Heart right ventricle (tissue), 16 donors: ENCODE measurements at regions of chr12 and their contacts with region 1.

Region 1: DNA sequence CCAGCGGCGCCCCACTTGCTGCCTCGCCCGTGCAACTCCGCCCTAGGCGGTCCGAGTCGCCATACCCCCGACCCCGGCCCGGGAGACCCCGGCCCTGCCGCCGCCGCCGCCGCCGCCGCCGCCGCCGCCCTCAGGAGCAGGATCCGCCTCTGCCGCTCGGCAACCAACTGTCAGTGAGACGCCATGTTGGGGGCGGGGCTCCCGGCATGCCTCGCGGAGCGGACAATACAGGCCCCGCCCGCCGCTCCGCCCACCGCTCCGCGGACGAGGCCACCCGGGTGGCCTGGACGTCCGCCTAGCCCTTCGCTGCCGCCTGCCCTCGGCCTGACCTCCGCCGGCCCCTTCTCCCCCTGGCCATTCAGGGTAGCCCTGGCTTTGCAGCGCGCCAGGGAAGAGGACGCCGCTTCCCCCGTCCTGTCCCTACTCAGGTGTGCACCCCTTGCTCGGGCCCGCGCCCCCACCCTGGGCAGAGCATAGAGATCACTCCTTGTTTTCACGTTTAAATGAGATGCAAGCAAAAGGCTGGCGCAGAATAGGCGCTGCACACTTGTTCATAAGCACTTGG is at the start of gene HECTD4:
- DNase-seq: peak; percentile 95 to 97
- ATAC-seq: peak; percentile 99 to 100 (median 99)
- H3K4me3 ChIP-seq: peak within 1 kb of the TSS; percentile 63 to 99 (median 92)
- H3K27ac ChIP-seq: peak within 1 kb of the TSS; percentile 76 to 93 (median 88)
- H3K4me1 ChIP-seq: peaks cover 0 to 29% (median 23%) of the 10 kb centered on the region in 9 donors
- H3K27me3 ChIP-seq: no peaks in the 10 kb centered on the region
- CTCF ChIP-seq: no peak
- total RNA-seq, gene HECTD4: 20.1 to 28.7 (median 23.9) TPM

Region 2: GRCh38 chr12:112198120-112198733 is 184.1 kb before region 1 on chr12:
- intact Hi-C with region 1: loop called in 9 of 10 experiments (anchors 1 to 10 kb)
- DNase-seq: peak; percentile 26 to 35
- ATAC-seq: peak; percentile 48 to 79 (median 74)
- H3K4me3 ChIP-seq: no peak overlapping the region
- H3K27ac ChIP-seq: no peak overlapping the region
- H3K4me1 ChIP-seq: peaks cover 0 to 3% (median 0%) of the 10 kb centered on the region in 9 donors
- H3K27me3 ChIP-seq: no peaks in the 10 kb centered on the region
- CTCF ChIP-seq: peak; percentile 27 to 63 (median 57)

Region 3: DNA sequence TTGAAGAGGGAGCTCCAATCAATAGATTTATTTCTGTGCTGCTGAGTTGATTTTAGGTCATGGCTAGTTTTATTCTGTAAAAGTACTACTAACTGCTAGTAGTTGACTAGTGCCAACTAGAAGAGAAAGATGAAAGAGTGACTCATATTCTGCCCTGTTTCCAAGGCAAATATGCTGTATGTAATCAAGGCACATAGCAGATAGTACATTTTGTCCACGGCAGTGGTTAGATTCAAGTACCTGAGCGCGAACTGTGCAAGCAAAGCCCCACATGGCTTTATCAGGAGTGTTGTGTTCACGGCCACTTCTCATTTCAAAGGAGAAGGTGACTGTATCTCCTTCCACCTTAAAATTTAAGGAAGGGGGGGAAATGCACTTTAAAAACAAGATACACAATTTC is 130.1 kb before region 1 on chr12:
- intact Hi-C with region 1: loop called in 3 of 10 experiments (anchors 10 kb)
- DNase-seq: no peak
- ATAC-seq: no peak
- H3K4me3 ChIP-seq: no peak overlapping the region
- H3K27ac ChIP-seq: no peak overlapping the region
- H3K4me1 ChIP-seq: no peaks in the 10 kb centered on the region
- H3K27me3 ChIP-seq: no peaks in the 10 kb centered on the region
- CTCF ChIP-seq: no peak

Region 4: GRCh38 chr12:112270673-112271072 is 111.6 kb before region 1 on chr12:
- intact Hi-C with region 1: loop called in 1 of 10 experiments (anchors 10 kb)
- DNase-seq: no peak
- ATAC-seq: no peak
- H3K4me3 ChIP-seq: no peak overlapping the region
- H3K27ac ChIP-seq: no peak overlapping the region
- H3K4me1 ChIP-seq: no peaks in the 10 kb centered on the region
- H3K27me3 ChIP-seq: no peaks in the 10 kb centered on the region
- CTCF ChIP-seq: no peak

Region 5: DNA sequence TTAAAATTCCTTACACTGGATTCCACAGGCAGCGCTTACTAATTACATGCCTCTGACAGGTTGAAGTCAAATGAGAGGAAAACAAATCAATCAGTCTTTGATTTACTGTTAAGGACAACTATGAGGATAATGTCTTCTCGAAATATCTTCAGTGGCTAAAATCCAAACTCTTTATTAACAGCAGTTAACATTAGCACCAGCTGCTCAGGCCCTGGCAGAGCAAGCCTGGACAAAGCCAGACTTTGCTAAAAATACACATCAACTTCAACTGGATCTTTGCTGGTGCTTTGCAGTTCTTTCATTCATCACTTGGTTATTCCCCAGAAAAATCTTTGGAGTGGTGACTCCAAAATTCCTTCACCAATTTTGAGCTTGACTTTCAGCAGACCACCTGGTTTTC is 98.8 kb before region 1 on chr12:
- intact Hi-C with region 1: loop called in 6 of 10 experiments (anchors 5 to 10 kb)
- DNase-seq: peak in 1 of 2 donors; percentile 9
- ATAC-seq: peak in 6 of 8 donors; percentile 50 to 83 (median 58)
- H3K4me3 ChIP-seq: no peak overlapping the region
- H3K27ac ChIP-seq: peak overlapping the region in 5 of 10 donors; percentile 16 to 54 (median 31)
- H3K4me1 ChIP-seq: peaks cover 0 to 39% (median 10%) of the 10 kb centered on the region in 9 donors
- H3K27me3 ChIP-seq: no peaks in the 10 kb centered on the region
- CTCF ChIP-seq: no peak

Region 6: DNA sequence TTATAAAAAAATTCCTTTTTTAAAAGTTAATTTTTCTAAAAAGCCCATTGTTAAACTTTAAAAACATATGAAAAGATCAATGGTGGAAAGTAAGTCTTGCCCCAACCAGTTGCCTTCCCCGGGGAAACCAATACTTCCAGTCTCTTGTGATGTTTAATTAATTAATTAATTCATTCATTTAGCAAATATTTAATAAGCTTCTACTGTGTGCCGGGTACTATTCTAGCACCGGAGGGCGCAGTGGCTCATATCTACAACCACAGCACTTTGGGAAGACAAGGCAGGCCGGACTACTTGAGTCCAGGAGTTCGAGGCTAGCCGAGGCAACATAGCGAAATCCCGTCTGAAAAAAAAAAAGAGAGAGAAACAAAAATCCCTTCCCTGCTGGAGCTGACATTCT is 87.5 kb before region 1 on chr12:
- intact Hi-C with region 1: loop called in 3 of 10 experiments (anchors 10 kb)
- DNase-seq: no peak
- ATAC-seq: no peak
- H3K4me3 ChIP-seq: no peak overlapping the region
- H3K27ac ChIP-seq: no peak overlapping the region
- H3K4me1 ChIP-seq: peaks cover 0 to 3% (median 0%) of the 10 kb centered on the region in 9 donors
- H3K27me3 ChIP-seq: no peaks in the 10 kb centered on the region
- CTCF ChIP-seq: peak in 1 of 9 donors; percentile 9

Region 7: GRCh38 chr12:112303004-112303403 is 79.3 kb before region 1 on chr12:
- intact Hi-C with region 1: loop called in 2 of 10 experiments (anchors 10 kb)
- DNase-seq: no peak
- ATAC-seq: no peak
- H3K4me3 ChIP-seq: no peak overlapping the region
- H3K27ac ChIP-seq: no peak overlapping the region
- H3K4me1 ChIP-seq: peaks cover 0 to 24% (median 9%) of the 10 kb centered on the region in 9 donors
- H3K27me3 ChIP-seq: no peaks in the 10 kb centered on the region
- CTCF ChIP-seq: no peak